Activated CD4-positive, alpha-beta T cell treated with anti-CD3 and anti-CD28 coated beads, Interleukin-2, amount 10 ng/mL, durations not matched to agents 24 days and 14 days (primary cell): ENCODE measurements at regions of chr15 and their contacts with region 1.

Region 1: DNA sequence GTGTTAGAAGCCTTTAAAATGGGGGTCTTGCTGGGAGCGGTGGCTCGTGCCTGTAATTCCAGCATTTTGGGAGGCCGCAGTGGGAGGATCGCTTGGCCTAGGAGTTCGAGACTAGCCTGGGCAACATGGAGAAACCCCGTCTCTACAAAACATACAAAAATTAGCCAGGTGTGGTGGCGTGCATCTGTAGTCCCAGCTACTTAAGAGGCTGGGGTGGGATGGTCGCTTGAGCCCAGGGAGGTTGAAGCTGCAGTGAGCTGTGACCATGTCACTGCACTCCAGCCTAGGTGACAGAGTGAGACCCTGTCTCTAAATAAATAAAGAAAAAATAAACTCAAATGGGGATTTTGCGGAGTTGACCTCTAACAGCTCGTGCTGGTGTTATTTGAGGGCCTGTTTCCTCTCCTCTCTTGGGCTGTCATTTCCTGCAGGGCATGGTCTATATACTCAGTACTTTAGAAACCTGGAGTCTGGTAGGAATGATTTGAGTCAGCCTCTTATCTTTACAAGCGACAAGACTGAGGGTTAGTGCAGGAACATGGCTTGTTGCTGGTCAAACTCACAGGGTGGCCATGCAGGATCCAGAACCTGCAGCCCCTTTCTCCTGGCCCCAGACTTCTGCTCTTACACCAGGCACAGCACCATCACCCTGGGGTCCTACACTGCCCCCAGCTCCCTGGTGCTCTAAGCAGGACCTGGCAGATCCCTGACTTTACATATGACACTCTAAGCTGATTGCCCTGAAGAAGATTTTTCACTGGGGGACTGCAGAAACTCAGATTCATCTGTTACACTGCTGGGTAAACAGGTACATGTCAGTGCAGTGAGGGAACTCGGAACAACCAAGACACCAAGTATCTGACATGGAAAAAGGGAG is 15.1 kb downstream of the EHD4 start:
- DNase-seq: no peak
- H3K4me3 Mint-ChIP-seq: no peak overlapping the region
- H3K27ac Mint-ChIP-seq: peak overlapping the region; percentile 30
- H3K4me1 Mint-ChIP-seq: peaks cover 26% of the 10 kb centered on the region
- H3K27me3 Mint-ChIP-seq: no peaks in the 10 kb centered on the region

Region 2: DNA sequence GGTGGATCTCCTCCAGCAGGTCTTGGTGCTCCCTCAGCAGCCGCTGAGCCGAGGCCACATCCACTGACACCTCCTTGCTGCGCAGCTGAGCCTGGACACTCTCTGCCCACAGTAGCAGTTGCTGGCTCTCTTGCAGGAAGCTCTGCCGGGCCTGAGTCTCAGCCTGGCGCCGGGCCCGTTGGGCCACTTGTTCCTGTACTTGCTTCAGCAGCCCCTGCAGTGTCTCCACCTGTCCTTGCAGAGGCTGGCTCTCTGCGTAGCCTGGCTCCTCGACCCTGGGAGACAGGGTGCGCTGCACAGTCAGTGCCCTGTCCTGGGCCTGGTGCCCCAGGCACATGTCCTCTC is 78.9 kb before region 1 on chr15:
- intact Hi-C with region 1: no loop called
- DNase-seq: no peak
- H3K4me3 Mint-ChIP-seq: no peak overlapping the region
- H3K27ac Mint-ChIP-seq: peak overlapping the region; percentile 37
- H3K4me1 Mint-ChIP-seq: peaks cover 3% of the 10 kb centered on the region
- H3K27me3 Mint-ChIP-seq: peaks cover 15% of the 10 kb centered on the region

Region 3: GRCh38 chr15:41936649-41937567 is 20.4 kb before region 1 on chr15:
- intact Hi-C with region 1: loop called (anchors 1 kb)
- DNase-seq: peak; percentile 94
- H3K4me3 Mint-ChIP-seq: peak overlapping the region; percentile 75
- H3K27ac Mint-ChIP-seq: peak overlapping the region; percentile 100
- H3K4me1 Mint-ChIP-seq: peaks cover 70% of the 10 kb centered on the region
- H3K27me3 Mint-ChIP-seq: no peaks in the 10 kb centered on the region

Region 4: DNA sequence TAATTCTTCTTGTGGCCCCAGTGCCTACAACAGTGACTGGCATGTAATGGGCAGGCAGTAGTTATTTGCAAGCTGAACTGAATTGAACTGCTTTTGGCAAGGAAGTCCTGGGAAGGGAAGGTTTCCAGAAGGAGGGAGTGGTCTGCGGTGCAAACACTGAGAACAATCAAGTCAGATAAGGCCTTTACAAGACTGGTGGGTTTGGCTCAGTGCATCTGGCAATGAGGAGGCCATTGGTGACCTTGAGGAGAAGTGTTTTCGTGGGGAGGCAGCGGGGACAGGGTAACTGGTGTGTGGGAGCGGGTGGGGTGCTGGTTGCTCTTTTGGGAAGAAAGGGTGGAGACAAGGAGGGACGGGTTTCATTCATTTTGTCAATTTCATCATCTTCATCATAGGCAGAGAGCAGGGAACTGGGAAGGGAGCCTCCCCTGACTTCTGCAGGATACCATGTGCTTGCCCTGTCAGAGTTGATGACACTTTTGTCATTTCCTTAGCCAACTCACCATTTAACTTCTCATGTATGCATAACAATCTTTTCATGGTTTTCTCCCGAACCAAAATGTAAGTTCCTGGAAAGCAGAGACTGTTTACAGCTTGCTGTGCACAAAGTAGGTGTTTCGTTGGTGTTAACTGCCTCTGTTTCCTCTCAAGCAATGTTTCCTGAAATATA is 23.5 kb after region 1 on chr15:
- intact Hi-C with region 1: no loop called
- DNase-seq: no peak
- H3K4me3 Mint-ChIP-seq: no peak overlapping the region
- H3K27ac Mint-ChIP-seq: peak overlapping the region; percentile 74
- H3K4me1 Mint-ChIP-seq: peaks cover 36% of the 10 kb centered on the region
- H3K27me3 Mint-ChIP-seq: peaks cover 10% of the 10 kb centered on the region